Activated CD4-positive, alpha-beta T cell treated with anti-CD3 and anti-CD28 coated beads for 36 hours (primary cell): ENCODE measurements at regions of chr3 and their contacts with region 1.

Region 1: DNA sequence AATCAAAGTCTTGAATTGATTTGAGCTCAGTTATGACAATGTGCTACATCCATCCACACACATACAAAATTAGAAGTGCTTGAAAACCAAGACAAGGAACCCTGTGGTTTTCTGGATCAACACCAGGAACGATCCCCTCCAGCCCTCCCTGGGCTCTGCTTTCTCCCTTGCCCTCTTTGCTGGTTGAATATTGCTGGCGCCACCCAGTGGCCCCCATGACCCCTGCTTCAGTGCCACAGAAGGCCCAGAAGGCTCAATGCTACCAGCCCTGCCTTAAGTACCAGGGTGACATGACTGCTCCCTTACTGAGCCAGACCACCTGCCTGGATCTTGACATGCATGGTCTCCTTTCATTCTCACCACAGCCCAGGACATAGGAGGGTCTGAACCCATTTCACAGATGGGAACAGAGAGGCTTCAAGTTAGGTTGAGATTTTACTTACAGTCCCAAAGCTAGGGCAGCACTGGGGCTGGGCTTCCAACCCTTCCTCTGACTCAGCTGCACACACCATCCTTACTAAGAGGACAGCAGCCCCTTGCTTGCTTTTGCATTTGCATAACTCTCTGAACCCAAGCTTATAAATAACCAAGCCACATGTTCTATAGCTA is 15.0 kb downstream of the IL12A start:
- DNase-seq: peak; percentile 69
- ATAC-seq: peak; percentile 91
- H3K4me3 Mint-ChIP-seq: no peak overlapping the region
- H3K27ac Mint-ChIP-seq: no peak overlapping the region
- H3K4me1 Mint-ChIP-seq: no peaks in the 10 kb centered on the region
- H3K27me3 Mint-ChIP-seq: no peaks in the 10 kb centered on the region

Region 2: DNA sequence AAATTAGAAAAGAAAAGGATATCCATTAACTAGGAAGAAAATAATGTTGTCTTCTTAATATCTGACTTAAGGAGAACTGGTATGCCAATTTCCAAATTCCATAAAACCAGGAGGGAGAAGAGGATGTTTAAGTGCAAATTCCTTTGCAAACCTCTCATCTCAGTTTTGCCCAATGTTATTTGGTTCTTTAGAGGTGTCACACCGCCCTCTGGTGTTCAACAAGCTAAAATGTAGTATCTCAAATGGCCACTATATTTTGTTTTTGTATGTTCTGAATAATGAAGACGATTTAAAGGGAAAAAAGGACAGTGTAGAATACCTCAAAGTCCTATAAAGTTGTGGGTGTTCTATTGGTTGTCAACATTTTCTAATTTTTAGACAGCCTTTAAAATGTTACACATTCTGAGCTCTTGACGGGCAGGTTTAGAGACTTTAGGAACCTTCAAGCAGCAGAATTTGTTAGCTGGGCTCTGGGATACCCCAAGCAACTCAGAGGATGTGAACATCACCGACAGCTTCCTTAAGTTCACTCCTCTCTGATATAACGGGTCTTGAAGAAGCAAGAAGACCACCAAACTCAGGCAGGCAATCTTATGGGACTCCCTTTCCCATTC is 743.5 kb before region 1 on chr3:
- CTCF ChIA-PET with region 1: no interaction called
- POLR2A ChIA-PET with region 1: no interaction called
- intact Hi-C with region 1: loop called in 1 of 2 experiments (anchors 5 kb)
- DNase-seq: peak; percentile 56
- ATAC-seq: no peak
- H3K4me3 Mint-ChIP-seq: no peak overlapping the region
- H3K27ac Mint-ChIP-seq: no peak overlapping the region
- H3K4me1 Mint-ChIP-seq: no peaks in the 10 kb centered on the region
- H3K27me3 Mint-ChIP-seq: peaks cover 3% of the 10 kb centered on the region

Region 3: GRCh38 chr3:159828542-159828943 is 175.1 kb before region 1 on chr3:
- CTCF ChIA-PET with region 1: interaction called, 8 read pairs
- POLR2A ChIA-PET with region 1: no interaction called
- intact Hi-C with region 1: loop called (anchors 1 to 2 kb)
- DNase-seq: no peak
- ATAC-seq: no peak
- H3K4me3 Mint-ChIP-seq: no peak overlapping the region
- H3K27ac Mint-ChIP-seq: no peak overlapping the region
- H3K4me1 Mint-ChIP-seq: no peaks in the 10 kb centered on the region
- H3K27me3 Mint-ChIP-seq: peaks cover 1% of the 10 kb centered on the region

Region 4: GRCh38 chr3:159884661-159885402 is 118.8 kb before region 1 on chr3:
- CTCF ChIA-PET with region 1: interaction called, 114 read pairs
- POLR2A ChIA-PET with region 1: interaction called, 3 read pairs
- intact Hi-C with region 1: loop called (anchors 1 kb)
- DNase-seq: no peak
- ATAC-seq: peak; percentile 33
- H3K4me3 Mint-ChIP-seq: no peak overlapping the region
- H3K27ac Mint-ChIP-seq: no peak overlapping the region
- H3K4me1 Mint-ChIP-seq: no peaks in the 10 kb centered on the region
- H3K27me3 Mint-ChIP-seq: peaks cover 3% of the 10 kb centered on the region

Region 5: DNA sequence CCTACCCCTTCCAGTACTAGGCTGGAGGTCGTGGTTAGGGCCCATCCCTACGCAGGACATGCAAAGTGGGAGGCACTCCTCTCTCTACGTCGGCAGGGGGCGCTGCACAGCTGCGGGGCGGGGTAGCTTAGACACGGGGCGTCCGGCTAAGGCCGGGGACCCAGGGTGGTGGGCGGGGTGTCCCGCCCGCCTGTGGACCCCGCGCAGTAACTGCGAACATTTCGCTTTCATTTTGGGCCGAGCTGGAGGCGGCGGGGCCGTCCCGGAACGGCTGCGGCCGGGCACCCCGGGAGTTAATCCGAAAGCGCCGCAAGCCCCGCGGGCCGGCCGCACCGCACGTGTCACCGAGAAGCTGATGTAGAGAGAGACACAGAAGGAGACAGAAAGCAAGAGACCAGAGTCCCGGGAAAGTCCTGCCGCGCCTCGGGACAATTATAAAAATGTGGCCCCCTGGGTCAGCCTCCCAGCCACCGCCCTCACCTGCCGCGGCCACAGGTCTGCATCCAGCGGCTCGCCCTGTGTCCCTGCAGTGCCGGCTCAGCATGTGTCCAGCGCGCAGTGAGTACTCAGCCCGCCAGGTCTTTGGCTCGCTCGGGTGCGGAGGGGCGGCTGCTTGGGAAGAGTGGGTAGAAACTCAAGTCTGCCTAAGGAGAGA is 14.9 kb before region 1 on chr3 and contains the start of gene IL12A:
- CTCF ChIA-PET with region 1: interaction called, 92 read pairs
- POLR2A ChIA-PET with region 1: no interaction called
- intact Hi-C with region 1: loop called (anchors 1 to 2 kb)
- DNase-seq: peak; percentile 88
- ATAC-seq: peak; percentile 95
- H3K4me3 Mint-ChIP-seq: peak within 1 kb of the TSS; percentile 52
- H3K27ac Mint-ChIP-seq: peak within 1 kb of the TSS; percentile 44
- H3K4me1 Mint-ChIP-seq: peaks cover 21% of the 10 kb centered on the region
- H3K27me3 Mint-ChIP-seq: peaks cover 13% of the 10 kb centered on the region
- total RNA-seq, gene IL12A: not detected

Region 6: GRCh38 chr3:160312014-160312624 is 308.5 kb after region 1 on chr3:
- CTCF ChIA-PET with region 1: no interaction called
- POLR2A ChIA-PET with region 1: no interaction called
- intact Hi-C with region 1: no loop called
- DNase-seq: peak; percentile 15
- ATAC-seq: peak; percentile 53
- H3K4me3 Mint-ChIP-seq: no peak overlapping the region
- H3K27ac Mint-ChIP-seq: no peak overlapping the region
- H3K4me1 Mint-ChIP-seq: no peaks in the 10 kb centered on the region
- H3K27me3 Mint-ChIP-seq: no peaks in the 10 kb centered on the region